Activated CD4-positive, alpha-beta T cell treated with anti-CD3 and anti-CD28 coated beads, Interleukin-2, amount 10 ng/mL, durations not matched to agents 7 days and 5 days (primary cell): ENCODE measurements at regions of chr6 and their contacts with region 1.

Region 1: DNA sequence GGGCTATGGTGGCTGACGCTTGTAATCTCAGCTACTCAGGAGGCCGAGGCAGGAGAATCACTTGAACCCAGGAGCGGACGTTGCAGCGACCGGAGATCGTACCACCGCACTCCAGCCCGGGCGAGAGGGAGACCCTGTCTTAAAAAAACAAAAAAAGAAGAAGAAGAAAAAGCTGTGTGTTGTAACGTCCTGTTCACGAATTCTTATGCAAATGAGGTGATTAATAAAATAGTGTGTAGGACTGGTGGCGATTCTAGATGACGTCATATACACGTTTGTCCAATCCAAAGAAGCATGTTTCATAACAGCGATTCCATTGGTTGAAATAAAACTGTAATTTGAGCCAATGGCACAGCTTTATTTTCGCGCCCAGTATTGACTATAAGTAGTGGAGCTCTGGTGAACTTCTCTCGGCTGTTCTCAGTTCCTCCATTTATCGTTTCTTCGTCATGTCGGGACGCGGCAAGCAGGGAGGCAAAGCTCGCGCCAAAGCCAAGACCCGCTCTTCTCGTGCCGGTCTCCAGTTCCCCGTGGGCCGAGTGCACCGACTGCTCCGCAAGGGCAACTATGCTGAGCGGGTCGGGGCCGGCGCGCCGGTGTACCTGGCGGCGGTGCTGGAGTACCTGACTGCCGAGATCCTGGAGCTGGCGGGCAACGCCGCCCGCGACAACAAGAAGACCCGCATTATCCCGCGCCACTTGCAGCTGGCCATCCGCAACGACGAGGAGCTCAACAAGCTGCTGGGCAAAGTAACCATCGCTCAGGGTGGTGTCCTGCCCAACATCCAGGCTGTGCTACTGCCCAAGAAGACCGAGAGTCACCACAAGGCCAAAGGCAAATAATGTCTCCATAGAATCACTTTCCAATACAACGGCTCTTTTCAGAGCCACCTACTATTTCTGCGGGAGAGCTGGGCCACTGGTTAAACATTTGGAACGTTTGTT is 47.0 kb downstream of the OR2B2 start:
- DNase-seq: peak; percentile 88
- H3K4me3 Mint-ChIP-seq: peak overlapping the region; percentile 99
- H3K27ac Mint-ChIP-seq: peak overlapping the region; percentile 100
- H3K4me1 Mint-ChIP-seq: peaks cover 65% of the 10 kb centered on the region
- H3K27me3 Mint-ChIP-seq: no peaks in the 10 kb centered on the region

Region 2: DNA sequence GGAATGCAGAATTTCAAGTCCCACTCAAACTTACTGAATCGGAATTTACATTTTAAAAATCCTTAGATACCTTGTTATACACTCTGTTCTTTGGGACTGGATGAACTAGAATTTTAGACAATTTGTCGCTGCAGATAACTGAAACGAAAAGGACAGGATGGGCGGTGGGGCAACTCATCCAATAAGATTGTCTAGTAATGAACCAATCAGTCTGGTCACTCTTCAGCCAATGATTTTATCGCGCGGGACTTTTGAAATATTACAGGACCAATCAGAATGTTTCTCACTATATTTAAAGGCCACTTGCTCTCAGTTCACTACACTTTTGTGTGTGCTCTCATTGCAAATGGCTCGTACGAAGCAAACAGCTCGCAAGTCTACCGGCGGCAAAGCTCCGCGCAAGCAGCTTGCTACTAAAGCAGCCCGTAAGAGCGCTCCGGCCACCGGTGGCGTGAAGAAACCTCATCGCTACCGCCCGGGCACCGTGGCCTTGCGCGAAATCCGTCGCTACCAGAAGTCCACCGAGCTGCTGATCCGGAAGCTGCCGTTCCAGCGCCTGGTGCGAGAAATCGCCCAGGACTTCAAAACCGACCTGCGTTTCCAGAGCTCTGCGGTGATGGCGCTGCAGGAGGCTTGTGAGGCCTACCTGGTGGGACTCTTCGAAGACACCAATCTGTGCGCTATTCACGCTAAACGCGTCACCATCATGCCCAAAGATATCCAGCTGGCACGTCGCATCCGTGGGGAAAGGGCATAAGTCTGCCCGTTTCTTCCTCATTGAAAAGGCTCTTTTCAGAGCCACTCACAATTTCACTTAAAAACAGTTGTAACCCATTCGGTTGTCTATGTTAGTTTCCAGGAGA is 1819.9 kb before region 1 on chr6:
- CTCF ChIA-PET with region 1: no interaction called
- POLR2A ChIA-PET with region 1: interaction called, 18 read pairs
- DNase-seq: peak; percentile 93
- H3K4me3 Mint-ChIP-seq: peak overlapping the region; percentile 83
- H3K27ac Mint-ChIP-seq: peak overlapping the region; percentile 99
- H3K4me1 Mint-ChIP-seq: peaks cover 44% of the 10 kb centered on the region
- H3K27me3 Mint-ChIP-seq: no peaks in the 10 kb centered on the region

Region 3: GRCh38 chr6:27132532-27133280 is 732.5 kb before region 1 on chr6:
- CTCF ChIA-PET with region 1: no interaction called
- POLR2A ChIA-PET with region 1: interaction called, 19 read pairs
- DNase-seq: peak; percentile 94
- H3K4me3 Mint-ChIP-seq: no peak overlapping the region
- H3K27ac Mint-ChIP-seq: no peak overlapping the region
- H3K4me1 Mint-ChIP-seq: peaks cover 66% of the 10 kb centered on the region
- H3K27me3 Mint-ChIP-seq: no peaks in the 10 kb centered on the region

Region 4: DNA sequence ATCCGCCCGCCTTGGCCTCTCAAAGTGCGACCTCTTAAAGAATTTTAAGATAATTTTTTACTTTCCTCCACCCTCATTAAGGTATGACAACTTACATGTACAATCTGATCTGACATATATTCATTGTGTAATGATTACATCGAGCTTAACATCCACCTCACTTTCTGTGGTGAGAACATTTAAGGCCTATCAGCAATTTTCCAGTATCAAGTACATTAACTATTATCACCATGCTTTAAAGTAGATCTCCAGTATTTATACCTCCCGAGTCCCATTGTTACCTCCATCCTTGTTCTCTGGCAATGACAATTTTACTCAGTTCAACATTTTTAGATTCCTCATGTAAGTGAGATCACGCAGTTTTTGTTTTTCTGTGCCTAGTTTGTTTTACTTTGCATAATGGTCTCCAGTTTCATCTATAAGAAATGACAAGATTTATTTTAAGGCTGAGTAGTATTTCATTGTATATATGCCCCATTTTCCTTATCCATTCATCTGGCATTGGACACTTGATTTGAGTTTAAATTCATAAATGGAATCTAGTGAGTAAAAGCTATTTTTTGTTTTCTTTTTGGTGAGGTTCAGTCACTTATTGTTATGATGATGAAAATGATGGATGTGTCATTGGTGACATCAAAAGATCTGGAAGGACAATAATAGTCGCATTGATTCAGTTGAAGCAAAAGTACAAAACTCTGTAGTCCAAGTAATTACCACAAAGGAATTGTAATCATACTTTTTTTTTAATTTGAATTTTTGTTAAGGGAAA is 40.0 kb before region 1 on chr6:
- CTCF ChIA-PET with region 1: interaction called, 7 read pairs
- POLR2A ChIA-PET with region 1: interaction called, 553 read pairs
- DNase-seq: no peak
- H3K4me3 Mint-ChIP-seq: peak overlapping the region; percentile 89
- H3K27ac Mint-ChIP-seq: peak overlapping the region; percentile 99
- H3K4me1 Mint-ChIP-seq: peaks cover 48% of the 10 kb centered on the region
- H3K27me3 Mint-ChIP-seq: no peaks in the 10 kb centered on the region

Region 5: GRCh38 chr6:27851440-27851839 is 13.7 kb before region 1 on chr6:
- CTCF ChIA-PET with region 1: interaction called, 9 read pairs
- POLR2A ChIA-PET with region 1: interaction called, 22 read pairs
- DNase-seq: no peak
- H3K4me3 Mint-ChIP-seq: no peak overlapping the region
- H3K27ac Mint-ChIP-seq: no peak overlapping the region
- H3K4me1 Mint-ChIP-seq: peaks cover 4% of the 10 kb centered on the region
- H3K27me3 Mint-ChIP-seq: peaks cover 17% of the 10 kb centered on the region